ENCODE measurements at regions of chr17 and their contacts with region 1.

Region 1: GRCh38 chr17:47009759-47010594 is 30.9 kb upstream of the RPRML start:
- DNase-seq: no peak
- ATAC-seq: peak; percentile 23

Region 2: DNA sequence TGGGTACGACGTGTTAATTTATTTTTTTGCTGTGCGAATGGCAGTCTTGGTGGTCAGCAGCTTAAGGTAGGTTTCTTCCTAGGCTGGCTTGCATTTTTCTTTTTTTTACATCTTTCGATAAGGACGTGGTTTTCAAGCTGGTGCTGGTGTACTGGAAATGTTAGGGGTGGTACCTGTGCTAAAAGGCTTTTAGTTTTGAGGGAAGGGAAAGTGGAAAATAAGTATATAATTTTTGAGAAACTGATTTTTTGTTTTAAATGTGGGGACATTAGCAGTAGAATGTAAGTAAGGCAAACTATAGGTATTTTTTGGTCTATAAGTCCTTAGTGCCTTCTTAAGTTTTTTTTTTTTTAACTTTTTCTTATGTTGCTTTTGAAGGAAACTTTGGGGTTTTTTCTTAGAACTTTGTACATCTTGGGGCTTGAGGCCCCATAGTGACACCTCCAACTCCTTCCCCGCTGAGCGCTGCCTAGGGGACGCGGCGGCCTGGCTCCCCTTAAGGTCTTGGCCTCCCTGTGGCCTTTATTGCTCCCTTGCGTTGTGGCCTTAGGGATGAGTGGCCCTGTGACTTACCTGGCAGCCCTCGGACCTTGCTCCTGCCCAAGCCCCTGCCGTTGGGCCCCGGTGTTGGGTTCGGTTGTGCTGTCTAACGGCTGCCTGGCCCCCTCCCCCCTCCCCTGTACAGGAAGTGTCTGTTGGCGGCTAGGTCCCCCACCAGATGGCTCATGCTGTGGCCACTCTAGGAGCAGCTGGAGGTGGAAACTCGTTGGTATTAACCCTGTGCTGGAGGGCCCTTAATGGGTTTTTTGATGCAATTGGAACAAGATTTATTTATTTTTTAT is 57.1 kb after region 1 on chr17:
- intact Hi-C with region 1: loop called (anchors 10 kb)
- DNase-seq: peak; percentile 87
- ATAC-seq: peak; percentile 98

Region 3: DNA sequence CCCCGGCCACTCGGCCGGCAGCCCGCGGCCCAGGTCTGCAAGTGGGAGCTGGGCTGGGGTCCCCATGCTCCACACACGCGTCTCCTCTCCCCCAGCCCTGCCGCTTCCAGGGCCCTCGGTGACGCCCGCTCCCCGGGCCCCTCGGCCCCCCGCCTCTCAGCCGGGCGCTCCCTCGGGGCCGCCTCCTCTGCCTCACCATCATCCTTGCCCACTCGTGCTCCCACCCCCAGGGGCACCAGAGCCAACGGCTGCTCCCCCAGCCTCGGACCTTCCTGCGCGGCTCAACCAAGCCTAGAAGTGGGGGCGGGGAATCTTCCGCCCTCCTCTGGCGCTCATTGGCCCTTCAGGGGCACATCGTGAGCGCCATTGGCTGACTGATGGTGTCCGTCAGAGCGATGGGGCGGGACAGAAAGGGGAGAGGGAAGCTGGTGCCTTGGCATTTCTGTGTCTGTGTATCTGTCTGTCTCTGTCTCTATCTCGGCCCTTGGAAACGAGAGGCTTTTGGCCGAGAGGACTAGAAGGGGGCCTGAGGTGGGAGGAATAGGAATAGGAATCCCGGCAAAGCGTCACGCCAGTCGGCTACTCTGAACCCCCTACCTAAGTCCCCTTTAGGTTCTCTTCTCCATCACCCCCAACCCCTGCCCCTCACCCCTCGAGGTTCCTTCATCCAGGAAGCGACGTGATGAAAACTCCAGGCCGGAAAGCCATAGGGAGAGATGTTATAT is 90.2 kb after region 1 on chr17:
- intact Hi-C with region 1: no loop called
- DNase-seq: peak; percentile 95
- ATAC-seq: peak; percentile 100

Measured in Right ventricle myocardium inferior (tissue), 1 donor.